ENCODE measurements at regions of chr10 and their contacts with region 1.

Region 1: GRCh38 chr10:22316285-22317120 is at the start of gene COMMD3:
- DNase-seq: peak; percentile 62
- H3K4me3 ChIP-seq: peak within 1 kb of the TSS; percentile 80
- H3K27ac ChIP-seq: peak within 1 kb of the TSS; percentile 89
- H3K27me3 ChIP-seq: no peaks in the 10 kb centered on the region
- CTCF ChIP-seq: no peak
- polyA plus RNA-seq, gene COMMD3: 49.4 and 64.7 TPM in 2 replicates

Region 2: GRCh38 chr10:22103701-22104470 is 212.6 kb before region 1 on chr10:
- CTCF ChIA-PET with region 1: no interaction called
- POLR2A ChIA-PET with region 1: interaction called, 12 read pairs
- DNase-seq: no peak
- H3K4me3 ChIP-seq: no peak overlapping the region
- H3K27ac ChIP-seq: no peak overlapping the region
- H3K27me3 ChIP-seq: no peaks in the 10 kb centered on the region
- CTCF ChIP-seq: peak; percentile 15; the same call in 1 of the 2 replicates

Region 3: GRCh38 chr10:22228943-22229801 is 87.3 kb before region 1 on chr10:
- CTCF ChIA-PET with region 1: no interaction called
- POLR2A ChIA-PET with region 1: interaction called, 17 read pairs
- DNase-seq: peak; percentile 78
- H3K4me3 ChIP-seq: peak overlapping the region; percentile 73
- H3K27ac ChIP-seq: peak overlapping the region; percentile 66
- H3K27me3 ChIP-seq: no peaks in the 10 kb centered on the region
- CTCF ChIP-seq: no peak

Region 4: GRCh38 chr10:22340362-22341189 is 24.1 kb after region 1 on chr10:
- CTCF ChIA-PET with region 1: no interaction called
- POLR2A ChIA-PET with region 1: interaction called, 19 read pairs
- DNase-seq: peak; percentile 55
- H3K4me3 ChIP-seq: peak overlapping the region; percentile 73
- H3K27ac ChIP-seq: peak overlapping the region; percentile 87
- H3K27me3 ChIP-seq: peaks cover 76% of the 10 kb centered on the region
- CTCF ChIP-seq: no peak

Region 5: GRCh38 chr10:22436884-22437619 is 120.5 kb after region 1 on chr10:
- CTCF ChIA-PET with region 1: no interaction called
- POLR2A ChIA-PET with region 1: interaction called, 13 read pairs
- DNase-seq: peak; percentile 90
- H3K4me3 ChIP-seq: peak overlapping the region; percentile 74
- H3K27ac ChIP-seq: peak overlapping the region; percentile 99
- H3K27me3 ChIP-seq: no peaks in the 10 kb centered on the region
- CTCF ChIP-seq: 0 out of 2 replicates have a peak, but pooled peaks have one; percentile 5